B cell (primary cell): ENCODE measurements at regions of chr15 and their contacts with region 1.

Region 1: GRCh38 chr15:63881431-63881830 is 47.7 kb upstream of the HERC1 start:
- DNase-seq: peak; percentile 69
- ATAC-seq: peak; percentile 84
- H3K4me3 ChIP-seq: peak overlapping the region in 1 of 5 experiments; percentile 25
- H3K4me3 Mint-ChIP-seq: peak overlapping the region; percentile 69
- H3K27ac ChIP-seq: no peak overlapping the region
- H3K27ac Mint-ChIP-seq: peak overlapping the region; percentile 69
- H3K4me1 ChIP-seq: peaks cover 29% of the 10 kb centered on the region in 2 donors
- H3K4me1 Mint-ChIP-seq: peaks cover 42% of the 10 kb centered on the region
- H3K27me3 ChIP-seq: no peaks in the 10 kb centered on the region
- H3K27me3 Mint-ChIP-seq: no peaks in the 10 kb centered on the region
- CTCF ChIP-seq: no peak

Region 2: DNA sequence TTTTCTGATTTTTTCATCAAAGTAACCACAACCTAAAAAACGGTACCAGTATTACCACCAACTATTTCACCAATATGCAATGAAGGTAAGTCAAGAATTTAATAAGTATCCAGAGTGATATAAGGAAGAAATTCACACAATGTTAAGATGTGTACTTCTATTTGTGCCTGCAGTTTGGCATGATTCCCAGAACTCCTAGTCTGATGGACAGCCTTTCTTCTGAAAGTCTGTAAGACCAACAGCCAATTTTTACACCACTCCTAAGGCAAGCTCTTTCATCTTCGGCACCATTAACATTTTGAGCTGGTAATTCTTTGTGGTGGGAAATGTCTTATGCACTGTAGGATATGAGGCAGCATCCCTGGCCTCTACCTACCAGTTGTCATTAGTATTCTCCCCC is 1929.5 kb before region 1 on chr15:
- CTCF ChIA-PET with region 1: no interaction called
- POLR2A ChIA-PET with region 1: interaction called, 10 read pairs
- intact Hi-C with region 1: no loop called
- DNase-seq: no peak
- ATAC-seq: no peak
- H3K4me3 ChIP-seq: no peak overlapping the region
- H3K4me3 Mint-ChIP-seq: no peak overlapping the region
- H3K27ac ChIP-seq: peak overlapping the region in 1 of 2 donors; percentile 15
- H3K27ac Mint-ChIP-seq: no peak overlapping the region
- H3K4me1 ChIP-seq: no peaks in the 10 kb centered on the region
- H3K4me1 Mint-ChIP-seq: no peaks in the 10 kb centered on the region
- H3K27me3 ChIP-seq: no peaks in the 10 kb centered on the region
- H3K27me3 Mint-ChIP-seq: no peaks in the 10 kb centered on the region
- CTCF ChIP-seq: no peak